OCI-LY7 (cell line): ENCODE measurements at regions of chr2 and their contacts with region 1.

Region 1: DNA sequence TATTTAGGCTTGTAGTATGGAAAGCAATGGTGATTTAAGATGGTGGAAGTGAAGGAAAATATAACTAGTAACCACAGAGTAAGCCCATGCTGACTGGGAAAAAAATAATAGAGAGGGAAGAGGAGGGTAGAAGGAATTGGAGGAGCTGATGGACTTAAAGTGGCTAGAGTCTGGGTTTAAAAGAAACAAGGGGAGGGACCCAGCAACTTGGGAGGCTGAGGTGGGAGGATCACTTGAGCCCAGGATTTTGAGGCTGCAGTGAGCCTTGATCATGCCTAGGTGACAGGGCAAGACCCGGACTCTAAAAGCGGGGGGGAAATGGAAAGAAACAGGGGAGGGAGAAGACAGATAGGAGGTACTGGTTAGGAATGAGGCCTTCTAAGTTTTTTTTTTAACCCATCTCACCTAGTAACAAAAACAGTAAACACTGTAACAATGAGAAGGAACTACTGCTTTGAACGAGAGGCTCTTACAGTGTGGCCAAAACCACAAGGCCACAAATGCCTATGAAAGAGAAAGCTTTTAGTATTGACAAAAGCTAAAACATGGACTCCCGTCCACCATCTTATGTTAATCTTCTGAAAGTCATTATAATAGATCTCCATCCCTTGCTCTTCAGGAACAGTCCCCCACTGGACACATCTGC is 26.6 kb downstream of the METTL8 start:
- DNase-seq: no peak
- H3K4me3 ChIP-seq: no peak overlapping the region
- H3K27ac ChIP-seq: peak overlapping the region; percentile 49
- H3K4me1 ChIP-seq: peaks cover 44% of the 10 kb centered on the region
- CTCF ChIP-seq: no peak

Region 2: DNA sequence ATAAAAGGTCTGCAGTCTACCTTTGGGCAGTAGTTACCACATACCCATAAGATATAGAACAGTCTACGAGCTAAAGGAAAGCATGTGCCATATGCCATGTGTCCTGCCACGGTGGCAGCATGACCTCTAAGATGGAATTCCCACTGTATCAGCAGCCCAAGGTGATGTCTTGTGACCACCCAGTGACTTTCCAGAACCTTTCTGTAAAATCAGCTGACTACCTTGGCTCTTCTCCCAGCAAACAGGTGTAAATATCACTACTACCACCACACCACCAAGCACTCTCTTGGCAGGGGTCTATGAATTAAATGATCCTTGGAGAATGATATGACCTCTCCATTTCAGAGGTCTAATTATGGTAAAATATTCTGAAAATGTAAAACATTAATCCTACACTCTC is 73.0 kb before region 1 on chr2:
- CTCF ChIA-PET with region 1: interaction called, 3 read pairs
- POLR2A ChIA-PET with region 1: interaction called, 11 read pairs
- intact Hi-C with region 1: no loop called
- DNase-seq: no peak
- H3K4me3 ChIP-seq: no peak overlapping the region
- H3K27ac ChIP-seq: peak overlapping the region; percentile 26
- H3K4me1 ChIP-seq: peaks cover 77% of the 10 kb centered on the region
- CTCF ChIP-seq: no peak

Region 3: GRCh38 chr2:171389325-171389724 is 17.8 kb before region 1 on chr2:
- CTCF ChIA-PET with region 1: interaction called, 4 read pairs
- POLR2A ChIA-PET with region 1: interaction called, 35 read pairs
- intact Hi-C with region 1: no loop called
- DNase-seq: peak; percentile 76
- H3K4me3 ChIP-seq: no peak overlapping the region
- H3K27ac ChIP-seq: peak overlapping the region; percentile 78
- H3K4me1 ChIP-seq: peaks cover 88% of the 10 kb centered on the region
- CTCF ChIP-seq: no peak